Upper lobe of right lung (tissue), 1 donor: ENCODE measurements at regions of chr15 and their contacts with region 1.

Region 1: DNA sequence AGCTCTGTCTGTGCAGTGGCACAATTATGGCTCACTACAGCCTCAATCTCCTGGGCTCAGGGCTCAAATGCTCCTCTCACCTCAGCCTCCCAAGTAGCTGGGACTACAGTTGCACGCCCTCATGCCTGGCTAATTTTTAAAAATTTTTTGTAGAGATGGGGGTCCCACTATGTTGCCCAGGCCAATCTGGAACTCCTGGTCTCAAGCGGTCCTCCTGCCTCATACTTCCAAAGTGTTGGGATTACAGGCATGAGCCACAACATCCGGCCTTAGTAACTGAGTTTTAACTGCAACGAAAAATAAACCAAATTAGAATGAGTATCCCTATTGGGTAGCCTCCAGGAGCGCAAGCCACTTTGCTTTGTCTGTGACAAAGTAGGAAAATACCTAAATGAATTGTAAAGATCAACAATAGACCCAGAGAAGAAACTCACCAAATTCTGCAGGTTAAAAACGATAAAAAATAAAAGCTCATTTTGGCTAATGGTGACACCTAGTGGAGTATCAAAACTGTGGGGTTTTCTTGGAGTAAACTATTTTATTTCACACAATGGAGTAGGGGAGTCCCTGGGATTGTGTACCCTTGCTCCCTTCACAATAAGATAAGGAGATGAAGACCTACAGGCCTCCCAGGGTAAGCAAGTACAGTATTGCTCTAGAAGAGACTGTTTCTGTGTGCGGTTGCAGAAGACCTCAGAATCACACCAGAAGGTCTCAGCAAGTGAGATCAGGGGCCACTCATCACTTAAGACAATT is 21.0 kb upstream of the CA12 start:
- DNase-seq: no peak
- ATAC-seq: peak; percentile 74
- H3K4me3 ChIP-seq: no peak overlapping the region
- H3K27ac ChIP-seq: no peak overlapping the region
- H3K4me1 ChIP-seq: no peaks in the 10 kb centered on the region
- H3K27me3 ChIP-seq: no peaks in the 10 kb centered on the region
- CTCF ChIP-seq: peak; percentile 65

Region 2: GRCh38 chr15:63288778-63289378 is 113.8 kb before region 1 on chr15:
- intact Hi-C with region 1: loop called (anchors 5 kb)
- DNase-seq: no peak
- ATAC-seq: peak; percentile 78
- H3K4me3 ChIP-seq: no peak overlapping the region
- H3K27ac ChIP-seq: no peak overlapping the region
- H3K4me1 ChIP-seq: peaks cover 14% of the 10 kb centered on the region
- H3K27me3 ChIP-seq: no peaks in the 10 kb centered on the region
- CTCF ChIP-seq: peak; percentile 71

Region 3: DNA sequence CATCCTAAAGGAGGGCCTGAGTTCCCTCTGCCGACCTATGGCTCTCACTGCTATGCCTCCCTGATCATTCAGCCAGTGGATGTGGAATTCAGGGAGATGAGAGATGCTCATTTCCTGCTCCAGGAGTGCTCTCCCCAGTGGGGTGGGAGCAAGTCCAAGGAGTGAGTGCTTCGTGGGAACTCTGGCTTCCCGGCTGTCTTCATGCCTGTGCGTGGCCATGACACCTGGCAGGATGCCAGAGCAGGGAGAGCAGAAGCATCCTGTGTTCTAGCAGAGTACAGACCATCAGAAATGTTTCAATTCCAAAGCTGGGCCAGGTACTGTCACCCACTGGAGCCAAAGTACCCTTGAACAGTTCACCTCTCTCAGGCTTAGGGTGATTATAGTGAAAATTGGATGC is 80.1 kb before region 1 on chr15:
- intact Hi-C with region 1: no loop called
- DNase-seq: no peak
- ATAC-seq: no peak
- H3K4me3 ChIP-seq: no peak overlapping the region
- H3K27ac ChIP-seq: no peak overlapping the region
- H3K4me1 ChIP-seq: no peaks in the 10 kb centered on the region
- H3K27me3 ChIP-seq: no peaks in the 10 kb centered on the region
- CTCF ChIP-seq: no peak

Region 4: GRCh38 chr15:63332367-63333124 is 70.1 kb before region 1 on chr15:
- intact Hi-C with region 1: no loop called
- DNase-seq: no peak
- ATAC-seq: no peak
- H3K4me3 ChIP-seq: no peak overlapping the region
- H3K27ac ChIP-seq: no peak overlapping the region
- H3K4me1 ChIP-seq: no peaks in the 10 kb centered on the region
- H3K27me3 ChIP-seq: no peaks in the 10 kb centered on the region
- CTCF ChIP-seq: no peak

Region 5: DNA sequence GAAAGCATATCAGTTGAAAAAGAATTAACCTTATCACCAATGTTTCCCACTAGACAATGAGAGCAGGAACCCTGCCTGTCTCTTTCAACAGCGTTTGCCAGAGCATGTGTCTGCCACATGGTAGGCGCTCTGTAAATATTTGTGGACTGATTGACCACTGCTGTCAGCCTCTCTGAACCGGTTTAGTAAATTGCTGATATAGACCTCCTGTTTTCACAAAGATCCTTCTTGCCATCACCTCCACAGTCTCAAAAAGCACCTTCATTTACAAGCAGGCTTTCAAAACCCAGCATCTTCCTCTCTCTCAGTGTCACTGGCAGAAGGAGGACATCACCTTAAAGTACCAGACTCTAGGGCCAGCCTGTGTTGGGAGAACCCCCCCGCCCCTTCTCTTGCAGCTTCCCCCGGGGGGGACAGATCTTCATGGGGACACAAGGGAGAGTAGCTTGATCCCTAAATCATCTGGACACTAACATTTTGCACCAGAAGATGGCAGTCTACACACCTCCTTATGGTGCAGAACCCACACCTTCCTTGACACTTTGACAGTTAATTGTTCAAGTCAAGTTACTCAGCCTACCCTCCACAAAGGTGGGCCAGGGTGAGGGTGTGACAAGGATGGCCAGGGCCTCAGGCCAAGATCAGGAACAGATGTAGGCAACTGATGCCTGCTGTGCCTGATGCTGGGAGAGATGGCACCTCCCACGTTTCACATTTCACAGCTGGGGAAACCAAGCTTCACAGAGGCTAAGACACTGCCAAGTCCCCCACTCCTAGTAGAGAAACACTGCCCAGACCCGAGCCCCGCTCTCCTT is 63.9 kb after region 1 on chr15:
- intact Hi-C with region 1: no loop called
- DNase-seq: no peak
- ATAC-seq: peak; percentile 92
- H3K4me3 ChIP-seq: no peak overlapping the region
- H3K27ac ChIP-seq: no peak overlapping the region
- H3K4me1 ChIP-seq: peaks cover 20% of the 10 kb centered on the region
- H3K27me3 ChIP-seq: no peaks in the 10 kb centered on the region
- CTCF ChIP-seq: peak; percentile 68

Region 6: DNA sequence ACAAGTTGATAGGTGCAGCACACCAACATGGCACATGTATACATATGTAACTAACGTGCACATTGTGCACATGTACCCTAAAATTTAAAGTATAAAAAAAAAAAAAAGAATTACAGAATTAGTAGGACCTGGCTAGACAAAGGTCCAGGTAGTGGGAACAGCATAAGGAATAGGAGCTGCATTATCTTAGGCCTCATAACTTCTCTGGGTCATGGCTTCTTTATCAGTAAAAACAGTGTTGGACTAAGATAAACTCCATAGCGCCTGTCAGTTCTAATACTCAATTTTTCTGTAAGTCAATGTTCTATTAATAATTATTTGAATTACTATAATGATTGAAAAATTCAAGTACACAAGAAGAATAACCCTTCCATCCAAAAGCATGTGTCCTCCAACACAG is 332.8 kb after region 1 on chr15:
- intact Hi-C with region 1: no loop called
- DNase-seq: no peak
- ATAC-seq: no peak
- H3K4me3 ChIP-seq: no peak overlapping the region
- H3K27ac ChIP-seq: no peak overlapping the region
- H3K4me1 ChIP-seq: no peaks in the 10 kb centered on the region
- H3K27me3 ChIP-seq: no peaks in the 10 kb centered on the region
- CTCF ChIP-seq: no peak